ENCODE measurements at regions of chrX and their contacts with region 1.

Region 1: DNA sequence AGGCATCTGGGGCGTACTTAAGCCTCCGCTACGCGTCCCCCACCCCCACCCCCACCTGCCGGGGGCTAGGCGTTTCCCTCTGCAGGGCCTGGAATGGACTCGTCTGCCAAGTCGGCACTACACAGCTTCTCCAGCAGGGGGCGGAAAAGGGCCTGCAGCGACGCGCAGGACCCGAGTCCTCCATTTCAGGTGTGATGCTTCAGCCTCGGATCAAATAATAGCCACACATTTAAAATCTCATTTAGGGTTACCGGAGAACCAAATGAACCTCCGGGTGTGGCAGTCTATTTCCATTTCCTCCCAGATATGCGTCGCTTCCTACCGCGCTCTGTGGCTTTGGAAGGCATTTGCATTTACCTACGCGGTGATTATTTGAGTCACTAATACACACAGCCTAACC is 2.9 kb downstream of the PAK3 start:
- DNase-seq: peak; percentile 46
- H3K4me3 Mint-ChIP-seq: no peak overlapping the region
- H3K27ac Mint-ChIP-seq: no peak overlapping the region
- H3K4me1 Mint-ChIP-seq: peaks cover 16% of the 10 kb centered on the region
- H3K27me3 Mint-ChIP-seq: peaks cover 25% of the 10 kb centered on the region

Region 2: GRCh38 chrX:111244235-111244750 is 145.4 kb after region 1 on chrX:
- intact Hi-C with region 1: loop called (anchors 1 kb)
- DNase-seq: no peak
- H3K4me3 Mint-ChIP-seq: no peak overlapping the region
- H3K27ac Mint-ChIP-seq: no peak overlapping the region
- H3K4me1 Mint-ChIP-seq: peaks cover 3% of the 10 kb centered on the region
- H3K27me3 Mint-ChIP-seq: no peaks in the 10 kb centered on the region

Measured in activated T-helper 2 cell treated with anti-CD3 and anti-CD28 coated beads, Interferon-gamma antibody, Interleukin-2, Interleukin-4, amounts not matched to agents 10 μg/mL and 5 μg/mL and 100 μg/mL, durations not matched to agents 14 hours and 24 hours and 36 hours (primary cell).